Panc1 (cell line): ENCODE measurements at regions of chr5 and their contacts with region 1.

Region 1: DNA sequence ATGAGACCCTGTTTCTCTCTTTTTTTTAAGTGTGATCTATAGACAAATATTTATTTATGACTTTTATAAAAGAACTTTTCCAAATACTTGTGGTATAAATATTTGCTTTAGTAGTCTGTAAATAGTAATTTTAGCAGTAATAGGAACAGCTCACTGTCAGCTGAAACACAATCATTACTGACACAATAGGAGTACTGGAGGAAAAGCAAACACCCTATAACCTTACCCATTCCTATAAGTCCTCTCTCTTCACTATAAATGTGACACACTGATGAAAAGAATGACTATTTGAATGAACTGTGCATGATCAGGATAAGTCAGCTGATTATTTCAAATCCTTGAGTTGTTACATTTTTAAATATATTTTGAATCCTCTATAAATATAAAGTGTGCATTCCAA is 72.4 kb downstream of the CDH12 start:
- DNase-seq: no peak
- ATAC-seq: no peak
- H3K4me3 ChIP-seq: no peak overlapping the region
- H3K27ac ChIP-seq: no peak overlapping the region
- H3K4me1 ChIP-seq: no peaks in the 10 kb centered on the region
- H3K27me3 ChIP-seq: no peaks in the 10 kb centered on the region
- CTCF ChIP-seq: no peak

Region 2: DNA sequence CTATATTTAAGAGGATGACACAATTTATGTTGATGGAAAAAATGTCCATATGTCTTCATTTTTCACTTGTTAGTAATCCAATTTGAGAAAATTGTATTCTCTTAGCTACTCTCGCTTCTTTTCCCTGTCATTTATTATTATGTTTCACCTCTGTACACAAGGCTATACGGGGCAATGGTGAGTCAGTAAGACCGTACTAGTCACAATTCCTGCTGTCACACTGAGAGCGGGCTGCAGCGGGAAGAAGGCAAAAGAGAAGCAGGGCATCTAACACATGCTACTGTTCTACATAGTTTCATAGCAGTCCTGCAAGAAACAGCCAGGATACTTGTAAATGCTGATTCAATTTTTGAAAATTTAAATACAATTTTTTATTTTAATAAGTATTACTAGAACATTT is 703.3 kb after region 1 on chr5:
- CTCF ChIA-PET with region 1: no interaction called
- POLR2A ChIA-PET with region 1: interaction called, 12 read pairs
- in situ Hi-C with region 1: no loop called
- intact Hi-C with region 1: no loop called
- DNase-seq: no peak
- ATAC-seq: no peak
- H3K4me3 ChIP-seq: no peak overlapping the region
- H3K27ac ChIP-seq: no peak overlapping the region
- H3K4me1 ChIP-seq: no peaks in the 10 kb centered on the region
- H3K27me3 ChIP-seq: no peaks in the 10 kb centered on the region
- CTCF ChIP-seq: no peak